CD8-positive, alpha-beta T cell (primary cell): ENCODE measurements at regions of chr5 and their contacts with region 1.

Region 1: GRCh38 chr5:172303572-172304335 is 20.2 kb upstream of the UBTD2 start:
- DNase-seq: no peak
- ATAC-seq: no peak
- H3K4me3 ChIP-seq: no peak overlapping the region
- H3K4me3 Mint-ChIP-seq: no peak overlapping the region
- H3K27ac ChIP-seq: no peak overlapping the region
- H3K27ac Mint-ChIP-seq: no peak overlapping the region
- H3K4me1 ChIP-seq: no peaks in the 10 kb centered on the region
- H3K4me1 Mint-ChIP-seq: no peaks in the 10 kb centered on the region
- H3K27me3 ChIP-seq: no peaks in the 10 kb centered on the region
- H3K27me3 Mint-ChIP-seq: peaks cover 4% of the 10 kb centered on the region
- CTCF ChIP-seq: no peak

Region 2: DNA sequence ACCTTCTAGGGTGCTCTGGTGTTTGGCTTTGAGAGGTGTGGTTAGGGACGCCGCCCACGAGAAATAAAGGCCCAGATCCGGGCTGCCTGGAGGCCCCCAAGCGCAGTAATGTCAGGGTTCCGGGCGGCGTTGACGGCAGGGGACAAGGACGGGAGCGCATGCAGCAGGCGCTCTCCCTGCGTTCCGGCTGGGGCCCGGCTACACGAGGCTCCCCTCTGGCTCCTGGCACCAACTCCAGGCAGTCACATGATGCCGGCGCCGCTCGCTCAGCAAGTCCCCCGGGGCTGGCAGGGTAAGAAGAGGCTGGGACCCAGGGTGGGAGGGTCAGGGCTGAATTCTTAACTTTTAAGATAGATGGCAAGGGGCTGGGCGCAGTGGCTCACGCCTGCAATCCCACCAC is 48.3 kb before region 1 on chr5:
- CTCF ChIA-PET with region 1: no interaction called
- POLR2A ChIA-PET with region 1: no interaction called
- intact Hi-C with region 1: loop called in 1 of 2 experiments (anchors 2 kb)
- DNase-seq: no peak
- ATAC-seq: no peak
- H3K4me3 ChIP-seq: no peak overlapping the region
- H3K4me3 Mint-ChIP-seq: no peak overlapping the region
- H3K27ac ChIP-seq: no peak overlapping the region
- H3K27ac Mint-ChIP-seq: no peak overlapping the region
- H3K4me1 ChIP-seq: no peaks in the 10 kb centered on the region
- H3K4me1 Mint-ChIP-seq: no peaks in the 10 kb centered on the region
- H3K27me3 ChIP-seq: no peaks in the 10 kb centered on the region
- H3K27me3 Mint-ChIP-seq: no peaks in the 10 kb centered on the region
- CTCF ChIP-seq: no peak

Region 3: DNA sequence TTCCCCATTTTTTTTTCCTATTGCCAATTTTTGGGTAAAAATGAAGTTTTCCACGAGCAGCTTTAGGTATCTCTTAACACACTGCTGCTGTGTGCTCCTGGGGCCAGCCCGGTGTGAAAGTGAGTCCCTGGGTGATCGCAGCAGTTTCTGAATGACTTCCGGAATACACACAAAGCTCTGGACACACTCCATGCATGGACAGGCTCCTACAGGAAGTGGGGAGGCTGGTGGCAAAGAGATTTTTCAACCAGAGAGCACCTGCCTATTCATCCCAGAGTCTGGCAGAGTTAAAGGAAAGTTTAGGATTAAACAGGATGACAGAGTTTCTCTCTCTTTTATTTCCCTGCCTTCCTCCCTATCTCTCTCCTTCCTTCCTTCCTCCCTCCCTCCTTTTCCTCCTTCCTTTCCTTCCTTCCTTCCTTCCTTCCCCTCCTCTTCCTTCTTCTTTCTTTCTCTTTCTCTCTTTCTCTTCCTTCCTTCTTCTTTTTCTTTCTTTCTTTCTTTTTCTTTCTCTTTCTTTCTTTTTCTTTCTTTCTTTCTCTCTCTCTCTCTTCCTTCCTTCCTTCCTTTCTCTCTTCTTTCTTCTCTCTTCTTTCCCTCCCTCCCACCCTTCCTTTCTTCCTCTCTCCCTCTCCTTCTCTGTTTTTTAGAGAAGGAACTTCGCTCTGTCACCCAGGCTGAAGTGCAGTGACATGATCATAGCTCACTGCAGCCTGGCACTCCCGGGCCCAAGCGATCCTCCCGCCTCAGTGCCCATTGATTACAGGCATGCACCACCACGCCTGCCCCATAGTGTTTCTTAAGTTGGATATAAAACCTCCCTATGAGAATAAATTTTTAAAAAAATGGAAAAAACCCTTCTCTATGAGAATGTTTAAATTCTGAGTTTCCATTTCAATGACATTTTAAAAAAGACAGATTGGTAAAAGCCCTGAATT is 18.5 kb after region 1 on chr5:
- CTCF ChIA-PET with region 1: no interaction called
- POLR2A ChIA-PET with region 1: no interaction called
- intact Hi-C with region 1: no loop called
- DNase-seq: no peak
- ATAC-seq: no peak
- H3K4me3 ChIP-seq: no peak overlapping the region
- H3K4me3 Mint-ChIP-seq: no peak overlapping the region
- H3K27ac ChIP-seq: no peak overlapping the region
- H3K27ac Mint-ChIP-seq: no peak overlapping the region
- H3K4me1 ChIP-seq: no peaks in the 10 kb centered on the region
- H3K4me1 Mint-ChIP-seq: no peaks in the 10 kb centered on the region
- H3K27me3 ChIP-seq: no peaks in the 10 kb centered on the region
- H3K27me3 Mint-ChIP-seq: no peaks in the 10 kb centered on the region
- CTCF ChIP-seq: no peak